ENCODE measurements at regions of chr4 and their contacts with region 1.

Region 1: DNA sequence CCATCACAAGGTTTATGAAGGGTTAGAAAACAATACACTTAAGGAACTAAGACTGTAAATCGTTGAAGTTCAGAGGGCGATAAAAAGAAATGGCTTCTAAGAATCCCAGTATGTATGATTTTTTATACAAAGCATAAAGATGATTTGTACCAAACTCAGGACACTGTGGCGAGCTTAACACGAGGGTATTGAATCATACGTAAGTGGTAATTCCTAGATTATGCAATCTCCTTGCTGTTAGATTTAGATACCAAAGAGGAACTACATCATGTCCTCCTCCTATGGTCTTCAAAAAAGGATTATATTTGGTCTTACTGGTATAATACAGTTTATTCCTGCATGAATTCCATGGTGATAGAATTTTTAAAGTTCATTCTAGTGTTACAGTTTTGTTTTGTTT is 23.9 kb downstream of the NFKB1 start:
- DNase-seq: no peak
- ATAC-seq: no peak
- H3K4me3 ChIP-seq: no peak overlapping the region
- H3K27ac ChIP-seq: no peak overlapping the region
- H3K4me1 ChIP-seq: peaks cover 20% of the 10 kb centered on the region
- H3K27me3 ChIP-seq: no peaks in the 10 kb centered on the region
- CTCF ChIP-seq: no peak
- EP300 ChIP-seq: no peak
- POLR2A ChIP-seq: no peak
- RAD21 ChIP-seq: no peak

Region 2: DNA sequence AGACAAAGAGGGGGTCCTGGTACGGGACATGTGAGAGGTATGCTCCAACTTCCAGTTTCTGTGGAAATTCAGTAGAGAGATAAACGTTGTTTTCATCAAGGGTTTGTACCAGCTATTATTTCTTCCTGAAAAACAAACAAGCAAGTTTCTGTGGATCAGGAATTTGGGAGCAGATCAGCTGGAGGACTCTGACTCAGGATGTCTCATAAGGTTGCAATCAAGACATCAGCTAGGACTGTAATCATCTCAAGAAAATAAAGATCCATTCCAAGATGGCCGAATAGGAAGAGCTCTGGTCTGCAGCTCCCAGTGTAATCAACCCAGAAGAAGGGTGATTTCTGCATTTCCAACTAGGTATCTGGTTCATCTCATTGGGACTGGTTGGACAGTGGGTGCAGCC is 47.4 kb before region 1 on chr4:
- CTCF ChIA-PET with region 1: no interaction called
- POLR2A ChIA-PET with region 1: no interaction called
- RAD21 ChIA-PET with region 1: no interaction called
- SMC1A ChIA-PET with region 1: no interaction called
- in situ Hi-C with region 1: no loop called
- intact Hi-C with region 1: no loop called
- DNase-seq: no peak
- ATAC-seq: no peak
- H3K4me3 ChIP-seq: no peak overlapping the region
- H3K27ac ChIP-seq: no peak overlapping the region
- H3K4me1 ChIP-seq: no peaks in the 10 kb centered on the region
- H3K27me3 ChIP-seq: no peaks in the 10 kb centered on the region
- CTCF ChIP-seq: no peak
- EP300 ChIP-seq: no peak
- POLR2A ChIP-seq: no peak
- RAD21 ChIP-seq: no peak

Region 3: GRCh38 chr4:102500696-102501446 is 24.2 kb before region 1 on chr4 and contains the start of gene NFKB1:
- CTCF ChIA-PET with region 1: interaction called, 3 read pairs
- POLR2A ChIA-PET with region 1: interaction called, 5 read pairs
- RAD21 ChIA-PET with region 1: interaction called, 4 read pairs
- SMC1A ChIA-PET with region 1: interaction called, 10 read pairs
- in situ Hi-C with region 1: no loop called
- intact Hi-C with region 1: no loop called
- DNase-seq: peak; percentile 55
- ATAC-seq: peak; percentile 48
- H3K4me3 ChIP-seq: peak within 1 kb of the TSS; percentile 75
- H3K27ac ChIP-seq: peak within 1 kb of the TSS; percentile 97
- H3K4me1 ChIP-seq: peaks cover 3% of the 10 kb centered on the region; the same call in 1 of the 2 replicates
- H3K27me3 ChIP-seq: no peaks in the 10 kb centered on the region
- CTCF ChIP-seq: no peak
- EP300 ChIP-seq: peak in 1 of 2 experiments; percentile 65; a peak in 1 of 4 replicates
- POLR2A ChIP-seq: peak; percentile 83; the same call in 1 of the 2 replicates
- RAD21 ChIP-seq: no peak
- polyA plus RNA-seq, gene NFKB1: 20.8 to 32.7 TPM

Region 4: GRCh38 chr4:102511830-102512605 is 13.1 kb before region 1 on chr4:
- CTCF ChIA-PET with region 1: interaction called, 16 read pairs
- POLR2A ChIA-PET with region 1: interaction called, 7 read pairs
- RAD21 ChIA-PET with region 1: interaction called, 4 read pairs
- SMC1A ChIA-PET with region 1: interaction called, 14 read pairs
- in situ Hi-C with region 1: no loop called
- intact Hi-C with region 1: no loop called
- DNase-seq: no peak
- ATAC-seq: no peak
- H3K4me3 ChIP-seq: no peak overlapping the region
- H3K27ac ChIP-seq: no peak overlapping the region
- H3K4me1 ChIP-seq: no peaks in the 10 kb centered on the region
- H3K27me3 ChIP-seq: no peaks in the 10 kb centered on the region
- CTCF ChIP-seq: no peak
- EP300 ChIP-seq: no peak
- POLR2A ChIP-seq: no peak
- RAD21 ChIP-seq: no peak

Region 5: DNA sequence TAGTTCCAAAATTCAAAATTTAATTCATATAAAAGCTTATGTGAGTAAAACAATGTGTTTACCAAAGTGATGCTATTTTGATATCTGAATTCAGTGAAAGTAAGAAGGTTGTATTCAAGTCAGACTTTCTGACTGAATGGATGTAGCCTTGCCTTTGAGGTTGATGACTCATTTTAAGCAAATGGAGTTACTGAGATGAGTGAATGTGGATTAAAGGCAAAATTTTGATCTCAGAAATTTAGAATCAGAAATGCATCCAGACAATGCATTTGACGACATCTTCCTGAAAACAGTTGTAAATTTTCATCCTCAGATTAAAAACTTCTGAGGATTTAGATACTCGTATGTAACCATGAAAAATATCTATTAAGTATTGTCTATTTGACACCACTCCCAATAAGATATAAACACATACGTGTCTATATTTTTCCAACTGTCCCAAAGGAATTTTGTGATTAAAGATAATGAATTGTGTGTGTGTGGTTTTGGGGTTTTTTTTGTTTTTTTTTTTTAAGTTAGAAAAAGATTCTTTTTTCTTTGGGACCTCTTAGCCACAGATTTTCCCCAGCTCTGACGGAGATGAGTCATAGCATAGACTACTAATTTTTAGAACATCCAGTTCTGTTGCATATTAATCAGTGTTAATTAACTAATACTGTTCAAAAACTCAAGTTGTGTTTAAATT is 10.4 kb after region 1 on chr4:
- CTCF ChIA-PET with region 1: interaction called, 10 read pairs
- POLR2A ChIA-PET with region 1: interaction called, 5 read pairs
- RAD21 ChIA-PET with region 1: interaction called, 5 read pairs
- SMC1A ChIA-PET with region 1: interaction called, 42 read pairs
- in situ Hi-C with region 1: no loop called
- intact Hi-C with region 1: no loop called
- DNase-seq: no peak
- ATAC-seq: peak; percentile 78
- H3K4me3 ChIP-seq: no peak overlapping the region
- H3K27ac ChIP-seq: peak overlapping the region; percentile 29; the same call in 1 of the 2 replicates
- H3K4me1 ChIP-seq: peaks cover 17% of the 10 kb centered on the region
- H3K27me3 ChIP-seq: no peaks in the 10 kb centered on the region
- CTCF ChIP-seq: no peak
- EP300 ChIP-seq: peak in 1 of 2 experiments; percentile 77; a peak in 2 of 4 replicates
- POLR2A ChIP-seq: no peak
- RAD21 ChIP-seq: no peak